ENCODE measurements at regions of chr3 and their contacts with region 1.

Region 1: DNA sequence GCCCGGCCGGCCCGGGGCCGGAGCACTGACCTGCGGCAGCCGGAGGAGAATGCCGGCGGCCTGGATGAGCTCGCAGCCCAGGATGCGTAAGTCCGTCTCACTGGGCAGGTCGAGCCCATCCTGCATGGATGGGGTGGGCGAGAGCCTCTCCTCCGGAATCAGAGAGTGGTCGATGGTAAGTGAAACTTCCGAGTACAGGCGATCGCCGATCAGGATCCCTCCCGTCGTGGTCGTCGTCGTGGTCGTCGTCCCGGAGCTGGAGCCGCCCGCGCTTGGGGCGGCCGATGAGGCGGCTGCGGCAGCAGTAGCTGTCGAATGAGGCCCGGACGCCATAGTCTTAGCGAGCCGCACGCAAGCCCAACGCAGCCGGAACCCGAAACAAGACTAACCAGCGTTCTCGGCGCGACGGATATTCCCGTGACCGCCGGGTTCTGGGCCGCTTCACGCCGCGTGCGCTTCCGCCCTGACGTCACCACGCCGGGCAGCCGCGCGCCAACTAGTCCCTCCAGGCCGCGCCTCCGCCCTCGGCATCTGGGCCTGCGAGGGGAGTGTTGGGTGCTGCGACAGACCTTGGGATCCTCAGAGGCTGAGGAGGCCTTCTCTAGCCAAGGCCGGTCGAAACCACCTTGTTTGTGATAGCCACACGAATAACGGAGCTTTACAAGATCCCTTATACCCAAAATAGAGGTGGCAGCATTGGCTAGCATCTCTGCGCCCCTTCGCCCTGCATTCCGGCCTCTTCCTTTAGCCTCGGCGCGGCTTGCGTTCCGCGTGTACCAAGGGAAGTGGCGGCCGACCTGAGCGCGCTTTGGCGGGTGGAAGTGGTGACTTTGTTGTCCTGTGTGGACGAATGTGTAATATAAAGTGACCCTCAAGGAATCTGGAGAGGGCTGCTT is at the start of gene CCNL1:
- DNase-seq: peak; percentile 92
- H3K4me3 ChIP-seq: peak within 1 kb of the TSS; percentile 89
- CTCF ChIP-seq: no peak

Region 2: GRCh38 chr3:157107644-157108133 is 52.3 kb before region 1 on chr3:
- CTCF ChIA-PET with region 1: no interaction called
- POLR2A ChIA-PET with region 1: no interaction called
- DNase-seq: no peak
- H3K4me3 ChIP-seq: no peak overlapping the region
- CTCF ChIP-seq: no peak

Region 3: GRCh38 chr3:157148196-157148889 is 11.7 kb before region 1 on chr3:
- CTCF ChIA-PET with region 1: interaction called, 5 read pairs
- POLR2A ChIA-PET with region 1: interaction called, 16 read pairs
- DNase-seq: no peak
- H3K4me3 ChIP-seq: no peak overlapping the region
- CTCF ChIP-seq: no peak

Region 4: GRCh38 chr3:157174649-157175498 is 14.9 kb after region 1 on chr3:
- CTCF ChIA-PET with region 1: interaction called, 27 read pairs
- POLR2A ChIA-PET with region 1: interaction called, 177 read pairs
- DNase-seq: peak; percentile 99
- H3K4me3 ChIP-seq: peak overlapping the region; percentile 71
- CTCF ChIP-seq: no peak

Region 5: GRCh38 chr3:157738441-157738840 is 578.4 kb after region 1 on chr3:
- CTCF ChIA-PET with region 1: no interaction called
- POLR2A ChIA-PET with region 1: no interaction called
- DNase-seq: no peak
- H3K4me3 ChIP-seq: no peak overlapping the region
- CTCF ChIP-seq: no peak

Measured in AG04449 (cell line).